ENCODE measurements at regions of chr12 and their contacts with region 1.

Region 1: DNA sequence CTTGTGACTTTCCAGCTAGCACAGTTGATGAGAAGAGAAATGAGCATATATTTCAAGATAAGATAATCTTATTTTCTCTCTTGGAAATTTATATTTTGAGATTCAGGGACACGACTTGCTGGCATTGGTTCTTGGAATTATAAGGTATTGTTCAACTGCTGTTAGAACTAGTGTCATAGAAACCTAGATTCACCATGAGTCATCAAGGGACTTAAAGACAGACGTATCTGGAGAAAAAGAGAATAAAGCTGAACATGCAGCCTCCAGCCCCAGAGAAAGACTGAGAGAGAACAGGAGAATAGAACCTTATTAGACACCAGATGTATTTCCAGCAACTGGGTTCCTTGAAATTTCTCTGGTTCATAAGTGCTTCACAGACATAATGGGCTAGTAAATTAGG is 194.4 kb upstream of the PPFIA2 start:
- DNase-seq: no peak
- H3K4me3 Mint-ChIP-seq: no peak overlapping the region
- H3K27ac Mint-ChIP-seq: no peak overlapping the region
- H3K4me1 Mint-ChIP-seq: peaks cover 15% of the 10 kb centered on the region
- H3K27me3 Mint-ChIP-seq: peaks cover 2% of the 10 kb centered on the region

Region 2: GRCh38 chr12:81809829-81810595 is 143.5 kb before region 1 on chr12:
- intact Hi-C with region 1: loop called (anchors 10 kb)
- DNase-seq: no peak
- H3K4me3 Mint-ChIP-seq: no peak overlapping the region
- H3K27ac Mint-ChIP-seq: no peak overlapping the region
- H3K4me1 Mint-ChIP-seq: peaks cover 2% of the 10 kb centered on the region
- H3K27me3 Mint-ChIP-seq: peaks cover 4% of the 10 kb centered on the region

Region 3: GRCh38 chr12:81992461-81992860 is 38.9 kb after region 1 on chr12:
- intact Hi-C with region 1: no loop called
- DNase-seq: peak; percentile 76
- H3K4me3 Mint-ChIP-seq: no peak overlapping the region
- H3K27ac Mint-ChIP-seq: no peak overlapping the region
- H3K4me1 Mint-ChIP-seq: no peaks in the 10 kb centered on the region
- H3K27me3 Mint-ChIP-seq: no peaks in the 10 kb centered on the region

Region 4: GRCh38 chr12:82461851-82462250 is 508.3 kb after region 1 on chr12:
- intact Hi-C with region 1: no loop called
- DNase-seq: no peak
- H3K4me3 Mint-ChIP-seq: no peak overlapping the region
- H3K27ac Mint-ChIP-seq: no peak overlapping the region
- H3K4me1 Mint-ChIP-seq: no peaks in the 10 kb centered on the region
- H3K27me3 Mint-ChIP-seq: no peaks in the 10 kb centered on the region